ENCODE measurements at regions of chr19 and their contacts with region 1.

Region 1: DNA sequence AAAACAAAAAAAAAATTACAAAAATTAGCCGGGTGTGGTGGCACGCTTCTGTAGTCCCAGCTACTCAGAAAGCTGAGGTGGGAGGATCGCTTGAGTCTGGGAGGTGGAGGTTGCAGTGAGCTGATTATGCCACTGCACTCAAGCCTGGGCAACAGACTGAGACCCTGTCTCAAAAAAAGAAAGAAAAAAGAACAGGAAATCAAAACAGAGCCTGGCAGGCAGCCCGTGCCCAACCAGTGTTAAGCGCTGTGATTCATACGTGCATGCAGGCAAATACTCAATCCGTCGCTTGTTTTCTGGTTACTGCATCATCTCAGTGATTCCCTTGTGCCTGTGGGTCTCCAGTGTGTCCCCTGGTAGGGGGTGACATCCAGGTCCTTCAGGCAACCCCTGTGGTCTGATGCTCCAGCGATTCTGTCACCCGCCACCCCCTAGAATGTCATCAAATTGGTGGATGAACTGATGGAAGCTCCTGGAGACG is 18.1 kb downstream of the DDX39A start:
- DNase-seq: no peak
- ATAC-seq: peak; percentile 67
- H3K4me3 Mint-ChIP-seq: peak overlapping the region; percentile 19
- H3K27ac Mint-ChIP-seq: peak overlapping the region; percentile 85
- H3K4me1 Mint-ChIP-seq: peaks cover 20% of the 10 kb centered on the region
- H3K27me3 Mint-ChIP-seq: no peaks in the 10 kb centered on the region
- CTCF ChIP-seq: no peak

Region 2: DNA sequence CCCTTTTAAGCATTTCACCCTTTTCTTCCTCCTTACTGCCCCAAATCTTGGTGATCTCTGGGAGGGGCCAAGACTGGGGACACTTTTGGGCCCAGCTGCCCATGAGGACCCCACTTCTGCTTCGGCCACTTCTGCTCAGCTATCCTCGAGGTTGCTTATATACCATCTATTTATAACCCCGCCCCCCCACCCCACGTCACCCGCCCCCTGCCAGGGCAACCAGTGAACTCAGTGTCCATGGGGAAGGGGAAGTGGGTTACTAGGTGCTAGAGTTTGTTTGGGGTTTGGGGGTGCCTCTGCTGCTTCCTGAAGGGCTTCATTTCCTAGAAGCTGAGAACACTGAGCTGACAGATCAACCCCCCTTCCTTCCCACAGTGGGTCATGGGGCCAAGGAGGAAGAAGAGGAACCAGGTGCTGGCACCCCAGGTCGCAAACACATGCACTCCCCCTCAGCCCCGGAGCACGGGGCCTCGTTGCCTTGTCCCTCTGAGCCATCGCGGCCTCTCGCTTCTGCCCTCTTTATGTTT is 25.9 kb before region 1 on chr19:
- CTCF ChIA-PET with region 1: interaction called, 8 read pairs
- POLR2A ChIA-PET with region 1: interaction called, 56 read pairs
- intact Hi-C with region 1: no loop called
- DNase-seq: peak; percentile 61
- ATAC-seq: peak; percentile 58
- H3K4me3 Mint-ChIP-seq: peak overlapping the region; percentile 66
- H3K27ac Mint-ChIP-seq: peak overlapping the region; percentile 97
- H3K4me1 Mint-ChIP-seq: peaks cover 77% of the 10 kb centered on the region
- H3K27me3 Mint-ChIP-seq: no peaks in the 10 kb centered on the region
- CTCF ChIP-seq: no peak

Region 3: GRCh38 chr19:14440049-14440448 is 39.1 kb after region 1 on chr19:
- CTCF ChIA-PET with region 1: no interaction called
- POLR2A ChIA-PET with region 1: no interaction called
- intact Hi-C with region 1: no loop called
- DNase-seq: peak; percentile 77
- ATAC-seq: peak; percentile 99
- H3K4me3 Mint-ChIP-seq: peak overlapping the region; percentile 87
- H3K27ac Mint-ChIP-seq: peak overlapping the region; percentile 88
- H3K4me1 Mint-ChIP-seq: peaks cover 36% of the 10 kb centered on the region
- H3K27me3 Mint-ChIP-seq: no peaks in the 10 kb centered on the region
- CTCF ChIP-seq: no peak